GM10248 (cell line): ENCODE measurements at regions of chrX and their contacts with region 1.

Region 1: DNA sequence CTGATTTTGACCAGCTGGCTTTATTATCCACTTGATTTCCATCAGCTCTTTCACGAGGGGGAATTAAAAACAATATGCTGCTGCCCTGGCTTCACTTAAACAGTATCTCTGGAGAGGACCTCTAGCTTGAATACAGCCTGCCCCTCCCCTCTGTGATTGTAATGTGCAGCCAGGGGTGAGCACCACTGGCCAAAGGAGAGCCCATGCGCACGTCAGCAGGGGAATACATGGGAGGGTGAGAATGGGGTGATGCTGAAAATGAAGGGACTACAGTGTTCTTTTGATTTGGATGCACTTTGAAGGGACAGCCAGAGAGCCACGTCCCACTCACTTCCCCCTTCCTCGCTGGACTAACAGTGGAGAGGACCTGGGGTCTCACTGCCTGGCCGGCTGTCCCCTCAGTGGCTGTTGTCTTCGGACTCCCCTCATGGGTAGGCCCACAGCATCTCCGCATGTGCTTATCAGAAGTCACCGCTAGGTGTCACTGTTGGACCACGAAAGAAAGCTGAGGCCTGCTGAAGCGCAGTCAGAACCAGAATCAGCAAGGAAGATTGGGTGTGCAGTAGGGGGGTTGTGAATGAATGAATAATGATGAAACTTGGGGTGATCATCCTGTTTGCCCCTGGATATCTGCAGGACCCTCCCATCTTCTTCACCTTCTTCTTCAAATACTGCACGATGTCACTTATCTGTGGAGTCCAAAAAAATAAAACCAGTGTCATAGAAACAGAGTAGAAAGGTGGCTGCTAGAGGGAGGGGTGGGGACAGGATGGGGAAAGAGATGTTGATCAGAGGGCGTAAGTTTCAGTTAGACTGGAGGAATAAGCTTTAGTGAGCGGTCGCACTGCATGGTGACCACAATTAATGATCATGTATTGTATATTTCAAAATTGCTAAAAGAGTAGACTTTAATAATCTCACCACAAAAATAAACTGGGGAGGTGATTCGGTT is 32.8 kb downstream of the CLCN4 start:
- DNase-seq: peak; percentile 63
- CTCF ChIP-seq: peak; percentile 76

Region 2: DNA sequence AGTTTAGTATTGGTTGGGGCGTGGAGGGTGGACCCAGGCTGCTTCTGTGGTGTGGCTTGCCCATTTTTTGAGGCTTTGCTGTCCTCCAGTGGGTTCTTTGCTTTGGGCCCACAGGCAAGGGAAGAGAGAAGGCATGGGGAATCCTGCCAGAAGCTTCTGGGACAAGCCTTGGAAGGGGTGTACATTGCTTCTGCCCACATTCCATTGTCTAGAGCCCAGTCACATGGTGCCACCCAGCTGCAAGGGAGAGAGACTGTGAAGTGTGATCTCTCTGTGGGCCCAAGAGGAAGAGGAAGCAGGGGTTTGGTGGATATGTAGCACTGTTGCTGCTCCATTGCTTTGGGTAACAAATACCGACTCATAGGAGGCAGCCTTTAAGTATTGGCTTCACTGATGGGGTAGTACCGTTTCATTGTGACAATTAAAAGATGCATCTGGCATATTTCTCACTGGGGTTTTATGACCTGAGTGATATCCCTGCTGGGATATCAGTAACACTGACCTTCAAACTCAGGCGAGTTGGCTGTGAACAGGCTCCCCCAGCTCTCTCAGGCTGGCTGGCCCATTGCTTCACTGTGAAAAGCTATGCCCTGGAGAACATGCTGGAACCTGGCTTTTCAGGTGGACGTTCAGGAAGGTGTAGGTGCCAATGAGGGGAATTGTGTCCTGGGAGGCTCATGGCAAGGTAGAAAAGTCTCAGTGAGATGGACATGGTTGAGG is 136.5 kb before region 1 on chrX:
- CTCF ChIA-PET with region 1: no interaction called
- POLR2A ChIA-PET with region 1: no interaction called
- DNase-seq: no peak
- CTCF ChIP-seq: no peak

Region 3: DNA sequence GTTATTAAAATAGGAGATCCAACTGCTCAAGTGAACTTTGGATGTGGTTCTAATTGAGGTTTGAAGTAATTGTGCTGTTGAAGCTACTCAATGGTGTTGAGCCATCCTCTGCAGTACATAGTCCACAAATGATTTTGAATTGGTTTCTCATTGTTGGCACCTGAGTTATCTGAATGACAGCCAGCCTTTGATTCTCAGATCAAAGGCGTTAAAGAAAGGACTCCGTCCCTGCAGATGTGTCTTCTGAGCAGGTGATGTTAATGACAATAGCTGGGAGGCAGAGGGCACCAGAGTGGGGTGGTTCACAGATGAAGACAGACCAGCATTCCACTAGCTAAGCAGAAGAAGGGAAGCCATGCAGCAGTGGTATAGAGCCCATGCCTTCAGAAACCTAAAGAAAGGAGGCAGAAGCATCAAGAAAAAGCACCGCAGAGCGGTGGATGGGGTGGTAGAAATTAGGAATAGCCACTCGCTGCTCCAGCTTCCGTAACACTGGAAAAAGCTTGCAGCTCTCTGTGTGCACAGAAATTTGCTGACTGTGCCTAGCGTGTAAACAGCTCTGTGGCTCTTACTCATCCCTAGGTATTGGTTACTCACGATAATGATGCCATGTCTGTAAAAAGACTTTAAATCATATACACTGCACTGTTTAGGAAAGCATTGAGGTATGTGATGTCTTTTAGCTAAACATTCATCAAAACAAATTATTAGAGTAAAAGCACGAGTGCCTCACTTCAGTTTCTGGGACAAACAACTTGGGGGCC is 112.0 kb before region 1 on chrX:
- CTCF ChIA-PET with region 1: no interaction called
- POLR2A ChIA-PET with region 1: no interaction called
- DNase-seq: no peak
- CTCF ChIP-seq: no peak

Region 4: DNA sequence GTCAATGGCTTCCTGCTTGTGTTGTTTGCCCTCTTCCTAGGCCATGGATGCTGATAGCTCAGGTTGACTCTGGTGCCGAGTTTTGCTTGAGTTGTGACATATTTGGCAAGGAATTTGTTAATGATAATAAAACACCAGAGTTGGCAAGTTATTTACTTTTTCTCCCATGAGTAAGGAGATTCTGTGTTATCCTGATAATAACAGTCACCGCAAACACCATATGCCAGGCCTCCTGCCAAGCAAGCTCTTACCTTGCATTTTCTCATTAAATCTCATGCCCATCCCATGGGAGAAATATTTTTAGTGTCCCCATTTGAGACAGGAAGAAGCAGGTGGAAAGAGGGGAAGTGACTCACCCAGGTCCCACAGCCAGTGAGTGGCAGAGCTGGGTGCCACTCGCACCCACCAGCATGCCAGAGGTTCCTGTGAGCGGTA is 100.2 kb before region 1 on chrX:
- CTCF ChIA-PET with region 1: no interaction called
- POLR2A ChIA-PET with region 1: no interaction called
- DNase-seq: no peak
- CTCF ChIP-seq: no peak

Region 5: GRCh38 chrX:10112510-10112909 is 77.1 kb before region 1 on chrX:
- CTCF ChIA-PET with region 1: no interaction called
- POLR2A ChIA-PET with region 1: no interaction called
- DNase-seq: no peak
- CTCF ChIP-seq: no peak

Region 6: GRCh38 chrX:10173316-10173900 is 16.2 kb before region 1 on chrX:
- CTCF ChIA-PET with region 1: interaction called, 34 read pairs
- POLR2A ChIA-PET with region 1: no interaction called
- DNase-seq: no peak
- CTCF ChIP-seq: no peak

Region 7: DNA sequence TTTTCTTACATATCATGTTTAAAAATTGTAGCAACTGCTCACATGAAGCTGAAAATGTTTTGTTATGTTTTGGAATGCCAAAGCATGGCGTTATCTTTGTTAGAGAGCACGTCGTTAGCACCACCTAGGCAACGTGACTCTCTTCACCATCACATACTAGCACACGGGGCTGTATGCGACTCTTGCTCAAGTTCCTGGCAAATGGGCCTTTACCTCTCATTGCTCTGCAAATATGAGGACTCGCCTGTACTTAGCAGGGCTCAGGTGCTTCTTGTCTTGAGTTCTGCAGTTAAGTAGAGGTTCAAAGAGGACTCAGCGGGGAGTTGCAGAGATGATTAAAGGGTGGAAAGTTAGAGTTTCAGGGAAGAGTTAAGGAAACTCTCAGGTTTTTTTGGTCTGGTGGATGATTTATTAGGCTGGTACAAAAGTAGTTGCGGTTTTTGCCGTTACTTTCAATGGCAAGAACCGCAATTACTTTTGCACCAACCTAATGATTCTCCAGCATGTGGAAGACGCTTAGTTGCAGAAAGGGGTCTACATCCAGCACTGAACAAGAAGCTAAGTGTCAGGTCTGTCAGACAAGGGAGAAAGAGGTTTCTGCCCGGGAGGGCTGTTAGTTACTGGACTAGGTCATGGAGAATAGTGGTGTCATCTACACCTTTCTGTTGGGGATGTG is 26.8 kb after region 1 on chrX:
- CTCF ChIA-PET with region 1: interaction called, 10 read pairs
- POLR2A ChIA-PET with region 1: no interaction called
- DNase-seq: no peak
- CTCF ChIP-seq: no peak

Region 8: DNA sequence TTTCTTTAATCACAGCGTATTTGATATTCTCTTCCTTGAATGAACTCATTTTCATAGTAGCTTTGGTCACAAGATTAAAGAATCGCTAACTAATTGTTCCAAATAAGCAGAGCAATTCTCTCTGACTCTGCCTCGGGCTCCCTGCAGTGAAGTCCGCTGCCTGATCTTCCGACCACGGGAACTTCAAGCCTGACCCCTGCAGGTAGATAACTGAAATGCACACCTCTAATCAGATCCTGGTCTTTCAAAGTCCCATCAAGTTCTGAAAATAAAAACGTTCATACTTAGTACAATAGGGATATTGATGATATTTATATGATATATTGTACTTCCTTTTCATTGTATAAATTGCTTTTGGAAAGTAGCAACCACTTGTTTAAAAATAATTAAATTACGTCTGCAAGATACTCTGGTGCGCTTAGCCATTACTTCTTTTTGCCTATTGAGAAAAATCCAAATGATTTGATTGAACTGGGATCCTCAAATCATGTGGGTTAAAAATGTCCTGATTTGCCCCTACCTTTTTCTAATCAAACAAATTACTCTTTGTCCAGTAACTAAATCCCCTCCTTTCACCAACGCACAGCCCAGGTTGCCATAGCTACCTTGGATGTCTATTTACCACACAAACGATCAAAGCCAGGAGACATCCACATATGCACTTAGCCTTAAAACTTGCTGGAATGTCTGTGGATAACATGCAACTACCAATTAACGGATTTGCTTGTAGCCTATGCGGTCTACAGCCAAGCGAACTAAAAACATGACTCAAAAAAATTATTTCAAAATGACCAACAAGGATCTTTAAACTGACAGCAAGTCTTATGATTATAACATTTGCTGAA is 426.6 kb after region 1 on chrX:
- CTCF ChIA-PET with region 1: interaction called, 18 read pairs
- POLR2A ChIA-PET with region 1: no interaction called
- DNase-seq: peak; percentile 41
- CTCF ChIP-seq: peak; percentile 31

Region 9: GRCh38 chrX:10769195-10769594 is 579.6 kb after region 1 on chrX:
- CTCF ChIA-PET with region 1: interaction called, 12 read pairs
- POLR2A ChIA-PET with region 1: no interaction called
- DNase-seq: peak; percentile 28
- CTCF ChIP-seq: peak; percentile 35